ENCODE measurements at regions of chr12 and their contacts with region 1.

Region 1: DNA sequence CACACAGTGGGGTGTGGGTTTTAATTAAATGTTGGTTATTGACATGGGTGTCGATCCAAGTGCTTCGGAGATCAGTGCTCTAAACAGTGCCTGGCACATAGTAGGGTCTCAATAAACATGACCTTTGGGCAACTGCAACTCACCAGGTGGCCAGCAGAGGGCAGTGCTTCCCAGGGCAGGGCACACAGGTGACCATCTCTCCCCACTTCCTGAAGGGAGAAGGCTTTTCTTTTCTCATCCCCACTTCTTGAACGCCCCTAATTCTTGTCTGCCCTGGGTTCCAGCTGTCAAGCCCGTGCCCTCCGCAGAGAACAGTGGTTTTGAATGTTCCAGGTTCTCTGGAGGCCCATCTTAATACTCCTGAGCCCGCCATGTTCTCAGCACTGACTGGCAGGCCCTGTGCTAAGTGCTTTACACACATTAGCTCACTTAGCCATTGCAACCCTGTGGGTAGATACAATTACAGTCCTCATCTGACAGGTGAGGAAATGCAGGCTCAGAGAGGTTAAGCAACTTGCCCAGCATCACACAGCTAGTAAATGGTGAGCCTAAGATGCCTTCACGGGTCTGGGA is 16.3 kb downstream of the RAPGEF3 start:
- DNase-seq: peak; percentile 85
- H3K4me3 Mint-ChIP-seq: no peak overlapping the region
- H3K27ac Mint-ChIP-seq: no peak overlapping the region
- H3K4me1 Mint-ChIP-seq: peaks cover 29% of the 10 kb centered on the region
- H3K27me3 Mint-ChIP-seq: no peaks in the 10 kb centered on the region

Region 2: DNA sequence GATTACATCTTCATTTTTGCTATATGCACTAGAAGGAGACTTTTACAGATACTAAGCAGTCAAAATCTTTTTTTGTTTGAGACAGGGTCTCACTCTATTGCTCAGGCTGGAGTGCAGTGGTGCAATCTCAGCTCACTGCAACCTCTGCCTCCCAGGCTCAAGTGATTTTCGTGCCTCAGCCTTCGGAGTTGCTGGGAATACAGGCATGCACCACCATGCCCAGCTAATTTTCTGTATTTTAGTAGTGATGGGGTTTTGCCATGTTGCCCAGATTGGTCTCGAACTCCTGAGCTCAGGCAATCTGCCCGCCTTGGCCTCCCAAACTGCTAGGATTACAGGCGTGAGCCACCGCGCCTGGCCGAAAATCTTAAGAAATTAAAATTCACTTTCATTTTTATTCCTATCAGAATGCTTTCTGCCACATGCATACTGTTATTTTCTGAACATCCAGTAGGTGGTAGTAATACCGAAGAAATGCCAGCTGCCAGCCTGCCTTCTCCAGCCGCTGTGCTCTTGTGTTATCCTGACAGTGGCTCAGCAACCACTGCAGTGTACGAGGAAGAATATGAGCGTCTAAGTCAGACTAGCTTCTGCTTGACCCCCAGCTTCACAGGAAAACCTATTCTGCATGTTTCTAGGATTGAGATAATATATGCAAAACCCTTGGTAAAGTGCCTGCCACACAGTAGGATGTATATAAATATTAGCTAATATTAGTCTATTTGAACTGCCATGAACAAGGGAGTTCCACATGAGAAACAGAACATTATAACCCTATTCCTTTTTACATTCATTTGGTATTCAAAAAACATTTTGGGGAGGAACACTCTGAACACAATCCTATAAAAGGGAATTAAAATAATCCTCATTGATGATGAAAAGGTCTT is 90.7 kb before region 1 on chr12:
- CTCF ChIA-PET with region 1: interaction called, 15 read pairs
- POLR2A ChIA-PET with region 1: no interaction called
- intact Hi-C with region 1: no loop called
- DNase-seq: peak; percentile 64
- H3K4me3 Mint-ChIP-seq: no peak overlapping the region
- H3K27ac Mint-ChIP-seq: no peak overlapping the region
- H3K4me1 Mint-ChIP-seq: peaks cover 20% of the 10 kb centered on the region
- H3K27me3 Mint-ChIP-seq: no peaks in the 10 kb centered on the region

Region 3: DNA sequence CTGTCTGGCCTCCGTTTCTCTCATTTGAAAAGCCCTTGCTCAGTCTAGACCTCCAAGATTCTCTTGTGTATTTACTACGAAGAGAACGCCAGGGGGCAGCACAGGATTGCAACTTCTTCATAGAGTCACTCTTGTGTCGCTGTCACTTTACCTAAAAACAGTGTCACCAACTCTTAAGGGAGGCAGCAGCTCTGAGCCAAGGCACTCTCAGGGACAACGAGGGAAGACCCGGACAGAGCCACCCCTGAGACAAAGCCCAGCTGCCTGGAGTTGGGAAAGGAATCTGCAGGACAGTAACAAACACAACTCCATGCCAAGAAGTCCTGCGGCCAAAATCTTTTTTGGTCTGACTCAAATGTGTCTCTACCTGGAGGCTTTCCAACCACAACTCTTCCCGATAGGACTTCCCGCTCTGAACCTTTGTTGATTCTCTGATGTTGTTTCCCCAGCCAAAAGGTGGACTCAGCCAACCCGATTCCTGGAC is 26.9 kb before region 1 on chr12:
- CTCF ChIA-PET with region 1: interaction called, 115 read pairs
- POLR2A ChIA-PET with region 1: no interaction called
- intact Hi-C with region 1: loop called (anchors 1 kb)
- DNase-seq: peak; percentile 85
- H3K4me3 Mint-ChIP-seq: no peak overlapping the region
- H3K27ac Mint-ChIP-seq: peak overlapping the region; percentile 47
- H3K4me1 Mint-ChIP-seq: peaks cover 16% of the 10 kb centered on the region
- H3K27me3 Mint-ChIP-seq: no peaks in the 10 kb centered on the region

Region 4: GRCh38 chr12:47758834-47759690 is 16.7 kb after region 1 on chr12 and contains the start of gene RAPGEF3:
- CTCF ChIA-PET with region 1: interaction called, 361 read pairs
- POLR2A ChIA-PET with region 1: interaction called, 5 read pairs
- intact Hi-C with region 1: no loop called
- DNase-seq: peak; percentile 86
- H3K4me3 Mint-ChIP-seq: peak within 1 kb of the TSS; percentile 68
- H3K27ac Mint-ChIP-seq: no peak within 1 kb of the TSS
- H3K4me1 Mint-ChIP-seq: peaks cover 46% of the 10 kb centered on the region
- H3K27me3 Mint-ChIP-seq: no peaks in the 10 kb centered on the region
- total RNA-seq, gene RAPGEF3: 2.1 to 2.5 TPM

Region 5: DNA sequence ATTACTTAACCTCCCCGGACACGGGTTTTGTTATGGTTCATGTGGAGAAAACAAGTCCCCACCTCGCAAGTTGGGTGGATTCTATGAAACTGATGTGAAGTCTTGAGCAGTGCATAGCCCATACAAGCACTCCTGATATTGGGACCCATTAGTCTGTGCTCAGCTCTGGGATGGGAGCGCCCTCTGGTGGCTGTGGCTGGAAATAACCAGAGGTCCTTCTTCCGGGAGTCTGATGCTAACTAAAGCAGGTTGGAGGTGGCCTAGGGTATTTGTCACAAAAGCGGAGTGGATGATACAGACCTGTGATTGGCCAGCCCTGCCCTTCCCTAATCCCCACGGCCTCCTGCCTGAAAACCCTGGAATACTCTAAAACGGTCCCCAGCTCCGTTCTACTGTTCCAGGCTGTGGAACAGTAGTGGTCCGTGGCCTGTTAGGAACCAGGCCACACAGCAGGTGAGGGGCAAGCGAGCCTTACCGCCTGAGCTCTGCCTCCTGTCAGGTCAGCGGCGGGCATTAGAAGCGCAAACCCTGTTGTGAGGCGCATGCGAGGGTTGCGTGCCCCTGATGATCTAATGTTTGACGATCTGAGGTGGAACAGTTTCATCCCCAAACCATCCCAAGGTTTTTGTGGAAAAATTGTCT is 37.1 kb after region 1 on chr12:
- CTCF ChIA-PET with region 1: interaction called, 837 read pairs
- POLR2A ChIA-PET with region 1: interaction called, 9 read pairs
- intact Hi-C with region 1: loop called (anchors 1 kb)
- DNase-seq: peak; percentile 95
- H3K4me3 Mint-ChIP-seq: no peak overlapping the region
- H3K27ac Mint-ChIP-seq: no peak overlapping the region
- H3K4me1 Mint-ChIP-seq: peaks cover 17% of the 10 kb centered on the region
- H3K27me3 Mint-ChIP-seq: no peaks in the 10 kb centered on the region

Region 6: DNA sequence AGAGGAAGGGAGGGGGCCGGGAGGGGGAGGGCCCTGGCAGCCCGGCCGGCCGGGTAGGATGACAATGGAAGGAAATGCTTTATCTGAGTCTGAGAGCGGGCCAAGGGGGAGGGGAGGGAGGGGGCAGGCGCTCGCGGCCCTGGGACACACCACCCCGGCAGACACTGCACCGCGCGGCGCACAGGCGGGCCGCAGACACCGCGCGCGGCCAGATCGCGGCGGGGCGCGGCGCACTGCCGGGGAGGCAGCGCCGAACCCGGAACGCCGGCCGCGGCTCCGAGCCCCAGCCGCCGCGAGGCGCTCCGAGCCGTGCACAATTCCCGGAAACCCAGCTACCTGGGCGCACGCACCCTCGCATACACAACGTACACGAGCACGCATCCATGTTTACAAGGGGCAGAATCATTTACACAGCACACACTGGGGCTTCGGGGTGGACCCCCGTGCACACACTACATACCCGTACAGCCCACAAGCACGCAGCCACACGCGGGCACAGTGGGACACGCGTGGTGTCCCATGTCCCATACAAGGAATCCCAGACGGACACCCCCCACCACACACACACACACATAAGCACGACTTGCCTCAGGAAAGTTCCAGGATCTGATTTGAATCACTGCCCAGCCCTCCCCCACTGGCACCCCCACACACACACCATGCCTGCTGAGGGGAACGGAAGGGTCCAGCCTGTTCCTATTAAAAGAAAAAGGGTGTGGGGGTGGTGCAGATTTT is 77.7 kb after region 1 on chr12 and contains the start of gene HDAC7:
- CTCF ChIA-PET with region 1: interaction called, 20 read pairs
- POLR2A ChIA-PET with region 1: no interaction called
- intact Hi-C with region 1: no loop called
- DNase-seq: peak; percentile 86
- H3K4me3 Mint-ChIP-seq: peak within 1 kb of the TSS; percentile 94
- H3K27ac Mint-ChIP-seq: peak within 1 kb of the TSS; percentile 99
- H3K4me1 Mint-ChIP-seq: peaks cover 68% of the 10 kb centered on the region
- H3K27me3 Mint-ChIP-seq: no peaks in the 10 kb centered on the region
- total RNA-seq, gene HDAC7: 257 to 280 TPM

Region 7: DNA sequence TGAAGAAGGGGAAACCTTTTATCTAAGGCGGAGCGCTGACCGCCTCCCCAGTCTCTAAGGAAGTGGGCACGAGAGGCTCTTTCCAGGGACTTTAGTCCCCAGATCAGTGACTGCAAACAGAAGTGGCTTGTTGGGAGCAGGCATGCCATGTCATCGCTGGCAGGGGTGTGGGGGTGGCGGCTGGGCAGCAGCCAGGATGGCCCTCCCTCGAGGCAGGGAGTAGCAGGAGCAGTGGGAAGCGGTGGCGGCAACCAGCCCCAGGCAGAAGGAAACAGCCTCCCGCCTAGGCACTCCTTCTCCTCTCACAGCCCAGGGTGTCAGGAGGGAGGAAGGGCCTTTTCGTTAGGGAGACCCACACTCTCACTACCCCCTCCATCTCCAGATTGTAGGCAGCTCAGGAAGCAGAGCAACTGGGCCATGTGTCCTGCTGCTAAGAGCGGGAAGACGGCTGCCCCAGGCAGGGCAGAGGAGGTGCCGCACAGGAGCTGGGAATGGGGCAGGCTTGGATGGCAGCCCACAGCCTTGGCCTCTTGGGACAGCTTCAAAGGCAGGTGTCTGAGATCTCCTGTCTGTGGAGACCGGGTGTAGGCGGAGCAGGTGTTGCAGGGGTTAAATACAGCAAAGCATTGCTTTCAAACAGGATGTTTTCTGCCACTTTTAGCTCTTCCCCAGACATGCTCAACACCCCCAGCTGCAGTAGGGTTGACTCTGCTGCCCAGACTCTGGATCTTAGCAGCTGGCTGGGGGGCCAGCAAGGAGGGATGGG is 140.6 kb after region 1 on chr12:
- CTCF ChIA-PET with region 1: interaction called, 10 read pairs
- POLR2A ChIA-PET with region 1: no interaction called
- intact Hi-C with region 1: no loop called
- DNase-seq: peak; percentile 67
- H3K4me3 Mint-ChIP-seq: peak overlapping the region; percentile 89
- H3K27ac Mint-ChIP-seq: peak overlapping the region; percentile 97
- H3K4me1 Mint-ChIP-seq: peaks cover 88% of the 10 kb centered on the region
- H3K27me3 Mint-ChIP-seq: no peaks in the 10 kb centered on the region